Calu3 (cell line): ENCODE measurements at regions of chr1 and their contacts with region 1.

Region 1: GRCh38 chr1:232630047-232630893 is at the start of gene SIPA1L2:
- DNase-seq: peak; percentile 98
- H3K4me3 Mint-ChIP-seq: peak within 1 kb of the TSS; percentile 93
- H3K27ac Mint-ChIP-seq: peak within 1 kb of the TSS; percentile 70
- H3K4me1 Mint-ChIP-seq: peaks cover 8% of the 10 kb centered on the region
- H3K27me3 Mint-ChIP-seq: peaks cover 76% of the 10 kb centered on the region
- CTCF ChIP-seq: peak; percentile 42
- total RNA-seq, gene SIPA1L2: 1.4 and 1.5 TPM in 2 replicates

Region 2: DNA sequence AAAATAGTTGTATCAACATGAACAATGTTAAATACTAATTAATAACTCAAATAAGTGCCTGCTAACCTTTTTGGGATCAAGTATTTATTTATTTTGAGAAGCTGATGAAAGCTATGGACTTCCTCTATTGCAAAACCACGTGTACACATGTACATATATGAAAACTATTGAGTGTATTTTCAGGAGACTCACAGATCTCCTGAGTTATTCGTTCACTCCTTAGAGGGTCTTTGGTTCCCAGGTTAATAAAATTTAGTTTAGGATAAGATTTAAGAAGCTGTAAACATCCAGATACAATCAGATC is 873.2 kb before region 1 on chr1:
- CTCF ChIA-PET with region 1: interaction called, 20 read pairs
- intact Hi-C with region 1: loop called (anchors 2 kb)
- DNase-seq: no peak
- H3K4me3 Mint-ChIP-seq: no peak overlapping the region
- H3K27ac Mint-ChIP-seq: no peak overlapping the region
- H3K4me1 Mint-ChIP-seq: no peaks in the 10 kb centered on the region
- H3K27me3 Mint-ChIP-seq: no peaks in the 10 kb centered on the region
- CTCF ChIP-seq: no peak

Region 3: DNA sequence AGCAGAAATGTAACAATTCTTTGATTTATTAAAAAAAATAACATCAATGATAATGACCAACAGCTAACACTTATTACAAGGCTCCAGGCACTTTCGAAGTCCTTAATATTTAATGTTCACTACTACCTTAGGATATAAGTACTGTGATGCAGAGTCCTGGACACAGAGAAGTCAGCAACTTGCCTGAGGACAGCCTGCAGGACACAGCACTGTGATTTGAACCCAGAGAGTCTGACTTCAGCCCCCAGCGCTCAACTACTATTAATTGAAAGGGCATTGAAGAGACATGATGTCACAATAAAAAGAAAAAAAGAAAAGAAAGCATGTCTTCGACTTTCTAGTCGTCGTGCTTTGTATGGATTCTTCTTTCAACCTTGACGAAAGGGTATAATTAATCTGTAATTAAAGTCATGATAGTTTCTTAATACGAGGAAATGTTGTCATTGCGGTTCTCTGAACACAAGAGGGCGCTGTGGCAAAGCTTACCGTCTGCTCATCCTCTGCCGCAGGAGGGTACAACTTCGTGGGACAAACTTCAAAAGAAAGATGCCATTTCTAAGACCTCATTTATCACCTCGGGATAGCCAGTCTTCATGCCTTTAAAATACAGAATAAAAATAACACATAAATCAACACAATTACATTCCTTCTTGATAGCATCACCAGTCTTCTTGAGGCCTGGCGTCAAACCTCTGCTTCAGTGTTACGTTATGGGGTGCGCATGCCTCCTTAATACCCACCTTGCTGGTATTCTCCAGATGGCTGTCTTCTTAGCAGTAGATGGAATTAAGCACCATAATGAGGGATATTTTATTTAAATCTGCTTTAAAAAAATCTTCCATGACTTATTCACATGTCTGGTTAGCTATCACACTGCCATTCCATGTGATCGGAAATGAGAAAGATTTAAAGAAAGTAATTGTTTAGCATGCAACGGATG is 763.6 kb before region 1 on chr1:
- CTCF ChIA-PET with region 1: interaction called, 23 read pairs
- intact Hi-C with region 1: loop called (anchors 1 kb)
- DNase-seq: peak; percentile 64
- H3K4me3 Mint-ChIP-seq: no peak overlapping the region
- H3K27ac Mint-ChIP-seq: no peak overlapping the region
- H3K4me1 Mint-ChIP-seq: peaks cover under 1% of the 10 kb centered on the region
- H3K27me3 Mint-ChIP-seq: no peaks in the 10 kb centered on the region
- CTCF ChIP-seq: peak; percentile 88

Region 4: DNA sequence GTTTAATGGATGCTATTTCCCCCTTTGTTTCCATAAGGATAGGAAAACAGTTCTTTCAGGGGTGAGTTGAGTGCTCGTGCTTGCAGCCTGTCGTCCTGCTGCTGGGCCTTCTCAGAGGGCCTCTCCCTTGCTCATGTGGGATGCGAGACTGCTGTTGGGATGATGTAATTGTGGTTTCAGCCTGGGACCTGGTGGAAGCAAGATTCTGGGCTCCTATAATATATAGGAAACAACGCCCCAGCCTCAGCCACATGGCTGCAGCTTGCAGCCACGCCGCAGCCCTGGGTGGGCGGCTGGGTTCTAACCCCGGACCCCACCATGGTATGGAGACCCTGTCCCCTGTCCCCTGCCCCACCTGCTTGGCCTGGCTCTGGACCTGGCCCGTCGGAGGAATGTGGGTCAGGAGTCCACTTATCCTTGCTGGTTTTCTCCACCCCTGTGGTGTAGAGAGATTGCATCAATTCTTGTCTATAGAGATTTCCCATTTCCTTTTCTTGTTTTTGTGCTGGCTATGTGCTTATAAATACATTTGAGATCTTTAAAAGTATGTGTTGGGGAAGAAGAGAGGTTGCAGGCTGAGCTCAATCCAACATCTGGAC is 358.2 kb before region 1 on chr1:
- CTCF ChIA-PET with region 1: no interaction called
- intact Hi-C with region 1: loop called (anchors 10 kb)
- DNase-seq: no peak
- H3K4me3 Mint-ChIP-seq: no peak overlapping the region
- H3K27ac Mint-ChIP-seq: no peak overlapping the region
- H3K4me1 Mint-ChIP-seq: no peaks in the 10 kb centered on the region
- H3K27me3 Mint-ChIP-seq: no peaks in the 10 kb centered on the region
- CTCF ChIP-seq: no peak

Region 5: DNA sequence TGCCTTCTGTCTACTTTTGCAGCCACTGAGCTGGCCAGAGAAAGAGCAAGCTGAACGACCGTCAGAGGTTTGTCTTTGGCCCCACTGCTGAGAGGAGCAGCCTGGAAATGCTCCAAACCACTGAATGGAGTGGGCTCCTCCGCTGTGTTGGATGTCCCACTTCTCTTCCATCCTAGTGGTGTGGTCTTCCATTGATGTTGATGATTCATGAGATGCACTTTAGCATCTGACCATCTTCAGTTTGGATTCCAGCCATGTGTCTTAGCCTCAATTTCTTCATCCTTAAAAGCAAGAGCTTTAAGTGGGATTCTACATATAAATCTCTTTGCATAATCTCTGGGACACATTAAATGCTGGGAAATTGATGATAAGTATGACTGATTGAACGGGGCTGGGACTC is 277.3 kb before region 1 on chr1:
- CTCF ChIA-PET with region 1: no interaction called
- intact Hi-C with region 1: no loop called
- DNase-seq: no peak
- H3K4me3 Mint-ChIP-seq: no peak overlapping the region
- H3K27ac Mint-ChIP-seq: no peak overlapping the region
- H3K4me1 Mint-ChIP-seq: no peaks in the 10 kb centered on the region
- H3K27me3 Mint-ChIP-seq: no peaks in the 10 kb centered on the region
- CTCF ChIP-seq: no peak

Region 6: GRCh38 chr1:232508130-232508701 is 122.1 kb before region 1 on chr1:
- CTCF ChIA-PET with region 1: no interaction called
- intact Hi-C with region 1: no loop called
- DNase-seq: no peak
- H3K4me3 Mint-ChIP-seq: no peak overlapping the region
- H3K27ac Mint-ChIP-seq: no peak overlapping the region
- H3K4me1 Mint-ChIP-seq: no peaks in the 10 kb centered on the region
- H3K27me3 Mint-ChIP-seq: no peaks in the 10 kb centered on the region
- CTCF ChIP-seq: no peak

Region 7: DNA sequence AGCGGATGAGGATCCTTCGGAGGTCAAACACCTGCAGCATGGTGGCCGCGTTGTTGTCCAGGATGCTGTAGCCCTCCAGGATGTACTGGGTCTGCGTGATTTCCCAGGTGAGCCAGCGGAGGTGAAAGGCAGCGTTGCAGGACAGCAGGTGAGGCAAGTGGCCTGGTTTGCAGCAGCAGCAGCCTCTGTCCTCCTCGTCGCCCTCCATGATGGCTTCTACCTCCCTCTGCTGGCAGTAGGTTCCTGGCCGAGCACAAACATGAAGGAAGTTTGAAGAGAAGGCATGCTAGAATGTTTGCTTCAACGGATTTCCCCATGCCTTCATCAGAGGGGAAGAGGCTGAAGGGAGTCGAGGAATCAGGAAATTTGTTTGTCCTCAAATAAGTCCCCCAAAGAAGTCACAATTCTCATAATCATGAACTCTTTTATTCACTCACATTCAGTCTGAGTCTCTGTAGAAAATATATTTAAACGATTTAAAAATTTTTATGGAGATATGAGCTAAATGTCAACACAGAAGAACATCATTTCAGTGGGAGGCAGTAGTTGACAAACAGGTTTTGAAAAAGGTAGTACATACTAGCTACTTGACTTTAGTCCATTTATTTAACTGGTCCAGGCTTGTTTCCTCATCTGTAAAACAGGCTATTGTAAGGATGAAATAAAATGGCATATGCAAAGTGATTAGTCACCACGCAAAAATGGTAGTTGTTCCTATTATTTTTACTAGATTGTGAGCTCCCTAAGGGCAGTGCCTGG is 395.1 kb after region 1 on chr1:
- CTCF ChIA-PET with region 1: interaction called, 3 read pairs
- intact Hi-C with region 1: loop called (anchors 5 kb)
- DNase-seq: peak; percentile 28
- H3K4me3 Mint-ChIP-seq: no peak overlapping the region
- H3K27ac Mint-ChIP-seq: no peak overlapping the region
- H3K4me1 Mint-ChIP-seq: peaks cover 15% of the 10 kb centered on the region
- H3K27me3 Mint-ChIP-seq: no peaks in the 10 kb centered on the region
- CTCF ChIP-seq: no peak

Region 8: DNA sequence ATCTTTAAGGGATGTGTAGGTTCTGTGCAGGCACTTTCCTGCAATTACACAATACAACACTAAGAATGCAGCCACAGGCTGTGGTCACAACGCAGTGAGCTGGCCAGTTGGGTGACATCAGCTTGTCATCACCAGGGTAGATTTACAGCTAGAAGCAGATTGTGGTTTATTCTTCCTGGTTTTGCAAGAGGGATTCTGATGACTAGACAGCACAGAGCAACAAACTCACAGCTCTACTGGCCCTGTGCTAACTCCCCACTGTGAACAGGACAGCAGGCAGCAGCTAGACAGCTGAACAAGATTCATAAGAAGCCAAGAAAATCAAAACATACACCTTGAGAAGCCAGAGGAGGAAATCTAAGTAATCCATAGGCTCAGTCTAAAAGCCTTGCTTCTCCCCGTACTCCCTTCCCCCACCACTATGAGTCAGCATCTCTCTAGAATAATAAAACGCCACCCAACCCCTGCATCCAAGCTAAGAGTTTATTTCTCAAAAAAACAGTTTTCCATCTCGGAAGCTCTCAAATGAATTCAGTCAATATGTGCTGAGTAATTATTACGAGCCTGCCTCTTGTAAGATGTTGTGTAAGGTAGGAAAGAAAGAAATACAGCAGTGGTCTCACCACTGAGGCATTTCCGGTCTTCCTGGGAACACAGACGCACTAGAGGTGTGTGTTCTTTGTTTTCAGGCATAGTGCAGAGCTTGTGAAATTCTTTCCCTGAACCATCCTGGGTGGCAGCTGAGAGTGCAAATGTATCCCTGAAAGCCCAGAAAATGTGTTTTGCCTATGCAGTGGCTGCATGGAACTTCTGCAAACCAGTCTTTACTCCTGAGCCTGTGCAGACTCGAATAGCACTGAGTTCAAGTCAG is 483.0 kb after region 1 on chr1:
- CTCF ChIA-PET with region 1: no interaction called
- intact Hi-C with region 1: loop called (anchors 10 kb)
- DNase-seq: peak; percentile 79
- H3K4me3 Mint-ChIP-seq: peak overlapping the region; percentile 69
- H3K27ac Mint-ChIP-seq: peak overlapping the region; percentile 84
- H3K4me1 Mint-ChIP-seq: peaks cover 37% of the 10 kb centered on the region
- H3K27me3 Mint-ChIP-seq: no peaks in the 10 kb centered on the region
- CTCF ChIP-seq: no peak

Region 9: DNA sequence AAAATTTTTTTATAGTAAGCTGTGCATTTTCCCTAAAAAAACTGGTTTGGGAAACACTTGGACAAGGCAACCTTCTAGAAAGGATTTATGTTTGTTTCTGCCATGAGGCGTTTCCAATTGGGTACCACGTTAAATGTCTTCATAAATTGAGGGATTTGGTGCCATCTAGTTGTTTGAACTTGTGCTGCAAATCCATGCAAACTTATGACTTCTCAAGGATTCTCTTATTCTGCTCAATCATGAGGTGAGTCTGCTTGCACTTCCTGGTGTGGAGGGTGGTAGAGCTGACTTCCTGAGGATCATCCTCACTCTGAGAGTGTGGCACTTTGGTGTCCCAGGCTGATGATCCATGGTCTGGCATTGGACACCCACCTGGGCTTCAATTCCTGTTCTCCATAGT is 542.0 kb after region 1 on chr1:
- CTCF ChIA-PET with region 1: no interaction called
- intact Hi-C with region 1: loop called (anchors 2 kb)
- DNase-seq: no peak
- H3K4me3 Mint-ChIP-seq: no peak overlapping the region
- H3K27ac Mint-ChIP-seq: no peak overlapping the region
- H3K4me1 Mint-ChIP-seq: no peaks in the 10 kb centered on the region
- H3K27me3 Mint-ChIP-seq: no peaks in the 10 kb centered on the region
- CTCF ChIP-seq: no peak